ENCODE measurements at regions of chr1 and their contacts with region 1.

Region 1: GRCh38 chr1:61049850-61050540 is 32.4 kb upstream of the NFIA start:
- DNase-seq: peak; percentile 93 to 98
- H3K4me3 ChIP-seq: peak overlapping the region; percentile 79 to 96
- H3K27ac ChIP-seq: peak overlapping the region; percentile 98 to 100
- H3K4me1 ChIP-seq: peaks cover 0 to 44% (median 23%) of the 10 kb centered on the region in 4 donors
- H3K27me3 ChIP-seq: no peaks in the 10 kb centered on the region
- CTCF ChIP-seq: peak; percentile 97 to 98

Region 2: DNA sequence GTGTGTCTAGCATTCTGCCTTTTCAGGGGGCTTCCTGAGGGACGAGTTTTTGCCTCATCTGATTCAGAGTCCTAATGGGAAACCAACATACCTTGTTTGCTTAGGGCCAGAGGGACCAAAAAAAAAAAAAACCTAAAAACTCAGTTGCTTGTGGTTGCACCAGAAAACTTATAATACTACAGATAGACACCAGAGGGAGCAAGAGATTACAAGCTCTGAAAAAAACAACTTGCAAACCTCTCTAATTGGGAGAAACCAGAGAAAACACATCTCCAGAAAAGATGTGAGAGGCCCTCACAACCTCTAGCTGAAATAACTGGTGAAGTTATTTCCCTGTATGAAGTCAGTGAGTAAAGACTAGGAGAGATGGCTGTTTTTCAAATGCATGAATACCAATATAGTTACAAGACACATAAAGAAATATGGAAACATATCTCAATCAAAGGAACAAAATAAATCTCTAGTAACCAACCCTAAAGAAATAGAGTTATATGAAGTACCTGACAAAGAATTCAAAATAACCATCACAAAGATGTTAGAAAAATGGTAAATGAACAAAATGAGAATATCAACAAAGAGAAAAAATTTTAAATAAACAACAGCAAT is 201.3 kb before region 1 on chr1:
- intact Hi-C with region 1: no loop called
- DNase-seq: no peak
- H3K4me3 ChIP-seq: no peak overlapping the region
- H3K27ac ChIP-seq: no peak overlapping the region
- H3K4me1 ChIP-seq: no peaks in the 10 kb centered on the region
- H3K27me3 ChIP-seq: no peaks in the 10 kb centered on the region
- CTCF ChIP-seq: peak; percentile 48 to 57

Region 3: DNA sequence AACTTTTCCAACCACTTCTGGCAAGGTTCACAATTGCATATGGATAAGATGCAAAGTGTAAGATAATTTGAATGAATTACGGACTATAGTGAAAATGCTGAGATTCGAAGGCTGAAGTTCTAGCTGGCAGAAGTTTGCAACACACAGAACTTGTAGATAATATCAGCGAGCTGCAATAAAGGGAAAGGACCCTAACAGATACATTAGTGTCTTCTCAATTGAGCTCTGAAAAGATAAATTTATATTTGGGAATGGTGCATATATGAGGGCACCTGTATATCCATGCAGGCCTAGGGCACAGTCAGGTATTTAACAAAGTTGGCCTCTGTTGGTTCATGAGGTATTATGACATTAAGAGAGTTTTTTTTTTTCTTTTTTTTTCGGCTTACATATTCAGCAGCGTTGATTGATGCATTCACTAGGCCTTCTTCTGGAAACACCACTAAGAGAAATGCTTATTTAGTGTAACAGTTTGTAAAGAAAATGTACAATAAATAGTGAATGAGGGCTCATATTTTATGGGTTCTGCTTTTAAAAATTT is 34.6 kb after region 1 on chr1:
- intact Hi-C with region 1: loop called (anchors 5 kb)
- DNase-seq: no peak
- H3K4me3 ChIP-seq: peak overlapping the region; percentile 88 to 95
- H3K27ac ChIP-seq: peak overlapping the region; percentile 99
- H3K4me1 ChIP-seq: peaks cover 0 to 57% (median 18%) of the 10 kb centered on the region in 4 donors
- H3K27me3 ChIP-seq: no peaks in the 10 kb centered on the region
- CTCF ChIP-seq: no peak

Region 4: DNA sequence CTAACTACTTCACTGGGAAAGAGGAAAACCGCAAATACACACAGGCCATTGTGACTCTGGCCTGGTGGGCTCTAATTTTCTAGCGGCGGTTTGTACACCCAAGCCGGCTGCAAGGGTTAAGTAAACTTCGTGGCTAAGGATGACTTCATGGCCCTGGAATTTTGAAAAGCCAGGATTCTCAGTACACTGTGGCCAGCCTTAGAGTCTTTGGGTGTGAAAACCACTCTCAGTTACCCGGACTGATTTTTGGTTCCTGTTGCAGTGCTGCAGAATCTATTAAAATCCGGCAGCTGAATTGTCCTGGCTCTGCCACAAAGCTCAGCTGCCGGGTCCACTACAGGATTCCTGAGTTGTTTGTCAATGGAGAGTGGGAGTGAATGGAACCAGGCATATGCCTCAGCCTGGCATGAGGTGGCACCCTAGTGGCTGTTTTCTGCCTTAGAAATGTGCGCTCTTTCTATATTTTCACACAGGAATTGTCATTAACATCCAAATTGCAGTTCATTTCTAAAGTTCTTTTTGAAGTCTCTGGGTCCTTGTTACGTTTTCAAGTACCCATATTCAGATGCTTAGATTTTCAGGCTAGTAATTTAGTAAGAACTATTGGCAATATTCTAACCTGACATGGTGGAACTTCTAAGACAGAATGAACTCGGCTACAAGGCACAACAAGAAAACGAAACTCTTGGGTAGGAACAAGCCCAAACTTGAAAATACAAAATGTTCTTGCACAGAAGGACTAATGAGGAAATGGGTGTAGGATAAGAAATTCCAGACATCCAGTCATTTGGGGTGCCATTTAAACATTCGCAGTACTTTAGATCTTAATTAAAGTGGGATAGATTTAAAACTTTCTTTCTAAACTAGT is 288.2 kb after region 1 on chr1:
- intact Hi-C with region 1: loop called (anchors 5 kb)
- DNase-seq: peak; percentile 81 to 91
- H3K4me3 ChIP-seq: peak overlapping the region; percentile 26 to 34
- H3K27ac ChIP-seq: peak overlapping the region; percentile 67 to 80
- H3K4me1 ChIP-seq: peaks cover 0 to 57% (median 26%) of the 10 kb centered on the region in 4 donors
- H3K27me3 ChIP-seq: no peaks in the 10 kb centered on the region
- CTCF ChIP-seq: peak; percentile 83 to 90

Region 5: DNA sequence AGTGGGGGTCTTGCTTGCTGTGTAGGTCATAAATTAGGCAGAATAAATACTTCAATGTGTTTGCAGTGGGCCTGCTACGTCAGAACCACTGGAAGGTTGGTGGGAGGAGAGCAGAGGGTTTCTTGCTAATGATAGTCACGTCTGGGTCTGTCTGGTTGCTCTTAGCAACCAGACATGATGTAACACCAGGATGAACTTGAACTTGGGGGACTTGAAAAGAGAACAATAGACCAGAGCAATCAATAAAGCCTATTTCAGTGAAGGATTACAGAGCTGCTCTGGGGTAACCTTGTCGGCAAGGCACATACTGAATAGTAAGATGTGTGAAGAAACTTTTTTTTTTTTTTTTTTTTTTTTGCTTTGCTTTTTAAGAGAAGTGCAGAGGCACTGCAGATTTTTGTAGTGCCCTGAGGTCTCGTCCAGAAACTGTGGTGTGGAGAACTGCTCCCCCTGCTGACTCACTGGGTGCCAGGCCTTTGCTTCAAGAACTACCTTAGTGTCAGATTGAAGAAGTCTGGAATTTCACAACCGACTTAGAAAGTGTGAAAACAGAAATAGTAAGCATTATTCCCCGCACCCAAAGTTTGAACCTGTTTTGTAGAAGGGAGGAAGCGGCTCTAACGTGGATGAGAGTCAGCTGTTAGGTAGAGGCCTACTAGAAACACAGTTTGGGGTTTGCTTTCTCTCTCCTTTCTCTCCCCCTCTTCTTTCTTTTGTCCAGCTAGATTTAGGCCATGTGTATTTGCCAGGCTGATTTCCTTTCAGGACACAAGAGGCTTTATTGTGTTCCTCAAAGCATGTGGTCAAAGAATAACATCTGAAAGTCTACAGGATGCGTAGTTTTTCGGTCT is 403.3 kb after region 1 on chr1:
- intact Hi-C with region 1: loop called (anchors 5 kb)
- DNase-seq: peak; percentile 95 to 97
- H3K4me3 ChIP-seq: no peak overlapping the region
- H3K27ac ChIP-seq: peak overlapping the region; percentile 88 to 93
- H3K4me1 ChIP-seq: peaks cover 0 to 58% (median 48%) of the 10 kb centered on the region in 4 donors
- H3K27me3 ChIP-seq: no peaks in the 10 kb centered on the region
- CTCF ChIP-seq: peak; percentile 74

Region 6: DNA sequence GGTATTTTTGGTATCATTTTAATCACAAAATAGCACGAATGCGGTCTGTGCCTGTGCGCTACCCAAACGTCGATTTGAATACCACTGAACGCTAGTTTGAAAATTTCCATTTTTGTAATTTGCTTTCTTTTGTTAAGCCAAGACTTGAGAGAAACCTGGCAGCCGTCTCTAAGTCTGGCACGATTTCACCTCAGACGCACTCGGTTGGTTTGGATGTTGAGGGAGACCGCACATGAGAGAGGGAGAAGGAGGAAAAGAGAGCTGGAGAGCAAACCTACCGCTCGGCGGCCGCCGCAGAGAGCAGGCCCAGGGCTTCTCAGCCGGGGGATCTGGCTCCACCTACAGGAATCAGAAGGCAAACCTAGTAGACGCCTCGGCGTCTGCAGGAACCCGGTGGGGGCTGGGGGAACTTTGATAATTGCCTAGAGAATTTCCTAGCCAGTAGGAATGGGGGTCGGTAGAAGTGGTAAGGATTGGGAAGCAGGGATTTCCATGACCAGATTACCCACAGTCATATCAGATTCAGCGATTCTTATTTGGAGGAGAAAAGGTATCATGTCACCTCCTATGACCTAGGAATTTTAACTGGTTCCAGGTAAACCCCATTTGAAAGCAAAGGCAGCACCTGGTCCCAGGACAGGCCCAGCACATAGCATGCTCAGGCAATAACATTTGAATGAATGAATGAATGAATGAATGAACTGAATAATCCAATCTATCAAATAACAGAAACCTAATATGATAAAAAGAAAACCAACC is 591.8 kb after region 1 on chr1:
- intact Hi-C with region 1: loop called (anchors 10 kb)
- DNase-seq: peak; percentile 86 to 93
- H3K4me3 ChIP-seq: peak overlapping the region; percentile 30 to 43
- H3K27ac ChIP-seq: peak overlapping the region; percentile 84 to 90
- H3K4me1 ChIP-seq: peaks cover 0 to 59% (median 34%) of the 10 kb centered on the region in 4 donors
- H3K27me3 ChIP-seq: no peaks in the 10 kb centered on the region
- CTCF ChIP-seq: peak; percentile 75 to 86

Region 7: DNA sequence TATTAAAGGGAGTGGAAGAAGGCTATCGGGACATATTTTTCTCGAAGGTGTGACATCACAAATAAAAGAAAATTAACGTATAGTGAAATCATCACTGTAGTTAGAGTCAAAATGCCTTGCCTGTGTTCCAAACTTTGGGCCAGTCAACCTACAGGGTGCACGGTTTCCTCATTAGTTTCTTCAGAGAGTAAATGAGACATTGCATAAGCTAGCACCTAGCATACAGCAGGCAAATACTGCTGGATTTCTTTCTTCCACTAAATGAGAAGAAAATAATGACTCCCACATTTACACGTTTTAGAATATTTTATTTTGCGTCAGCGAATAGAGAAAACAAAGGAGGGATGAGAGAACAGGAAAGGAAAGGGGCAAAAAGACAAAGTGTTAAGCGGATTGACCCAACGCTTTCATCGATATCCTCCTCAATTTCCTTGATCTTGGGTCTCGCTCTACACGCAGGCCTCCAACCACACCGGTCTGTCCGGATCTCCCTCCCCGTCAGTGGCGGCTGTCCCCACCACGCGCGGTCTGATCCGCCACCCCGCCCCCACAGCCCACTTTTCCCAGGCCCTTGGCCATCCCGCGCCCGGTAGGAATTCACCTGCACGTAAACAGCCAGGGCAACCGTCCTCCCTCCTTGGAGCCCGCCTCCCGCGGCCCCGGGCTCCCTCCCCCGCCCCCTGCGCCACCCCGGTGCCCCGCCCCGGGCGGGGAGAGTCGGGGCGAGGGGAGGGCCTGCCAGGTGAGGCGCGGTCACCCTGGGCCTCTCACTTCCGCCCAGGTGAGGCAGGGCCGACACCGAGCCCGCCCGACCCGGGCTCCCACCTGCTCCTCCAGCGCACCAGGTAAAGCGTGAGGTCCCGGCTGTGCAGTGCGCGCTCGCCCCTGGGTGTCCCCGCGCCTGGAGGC is 692.0 kb after region 1 on chr1 and contains the start of gene PATJ:
- intact Hi-C with region 1: loop called (anchors 5 kb)
- DNase-seq: peak; percentile 46 to 77
- H3K4me3 ChIP-seq: peak within 1 kb of the TSS; percentile 72 to 92
- H3K27ac ChIP-seq: peak within 1 kb of the TSS; percentile 94 to 99
- H3K4me1 ChIP-seq: peaks cover 0 to 26% (median 10%) of the 10 kb centered on the region in 4 donors
- H3K27me3 ChIP-seq: no peaks in the 10 kb centered on the region
- CTCF ChIP-seq: no peak

Measured in tibial artery (tissue), 4 donors.